Left colon (tissue), 2 donors: ENCODE measurements at regions of chr10 and their contacts with region 1.

Region 1: DNA sequence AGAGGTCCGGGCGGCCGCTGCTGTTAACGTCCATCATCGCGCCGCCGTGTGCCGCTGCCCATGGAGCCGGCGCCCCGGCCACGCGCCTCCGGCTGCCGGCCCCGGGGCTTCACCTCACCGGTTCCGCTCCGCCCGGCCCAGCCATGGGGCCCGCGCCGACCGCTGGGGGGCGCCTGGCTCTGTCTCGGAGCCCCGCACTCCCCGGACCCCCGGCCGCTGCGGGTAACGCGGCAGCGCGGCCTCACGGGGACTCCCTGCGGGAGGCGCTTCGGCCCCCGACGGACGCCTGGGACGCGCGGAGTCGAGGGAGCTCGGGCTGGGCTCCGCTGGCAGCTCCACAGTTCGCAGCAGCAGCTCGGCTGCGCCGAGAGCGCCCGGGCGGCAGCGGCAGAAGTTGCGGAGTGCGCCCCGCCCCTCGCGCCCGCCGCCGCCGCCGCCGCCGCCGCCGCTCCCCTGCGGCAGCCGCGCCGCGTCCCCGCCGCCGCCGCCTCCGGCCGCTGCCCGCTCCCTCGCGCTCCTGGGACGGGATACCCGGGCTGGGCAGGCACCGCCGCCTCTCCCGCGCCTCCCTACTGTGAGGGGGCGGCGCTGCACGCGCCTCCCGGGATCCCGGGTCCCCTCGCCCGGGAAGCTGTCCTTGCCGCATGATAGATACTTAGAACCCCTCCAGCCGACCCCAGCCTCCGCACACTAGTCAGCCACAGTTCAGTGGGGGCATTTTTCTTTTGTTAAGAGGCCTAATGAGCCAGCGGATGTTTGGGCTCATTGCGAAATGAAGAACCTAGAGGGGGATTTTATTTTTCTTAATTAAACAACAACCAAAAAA is at the start of gene HTR7:
- DNase-seq: peak in 1 of 2 donors; percentile 65
- ATAC-seq: peak; percentile 91
- total RNA-seq, gene HTR7: 0.21 to 0.61 TPM

Region 2: GRCh38 chr10:89793649-89794254 is 1064.1 kb before region 1 on chr10:
- intact Hi-C with region 1: loop called in 1 of 2 experiments (anchors 10 kb)
- DNase-seq: no peak
- ATAC-seq: peak; percentile 75

Region 3: DNA sequence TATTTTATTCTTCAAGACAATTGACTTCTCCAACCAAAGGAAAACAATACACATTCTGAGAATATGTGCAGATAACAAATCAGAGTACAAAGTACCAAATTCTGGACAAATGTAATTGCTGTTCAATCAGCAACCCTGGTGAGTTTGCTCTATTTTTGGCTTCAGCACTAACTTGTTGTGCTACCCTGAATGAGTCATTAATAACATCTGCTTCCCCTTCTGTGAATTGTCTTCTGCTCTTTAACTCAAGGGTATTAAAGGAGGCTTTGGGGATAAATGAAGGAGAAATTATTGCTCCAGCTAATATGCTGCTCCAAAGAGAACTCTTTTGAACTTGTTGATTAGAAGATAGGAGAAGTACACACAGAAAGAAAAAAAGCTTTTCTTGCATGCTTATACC is 459.3 kb before region 1 on chr10:
- intact Hi-C with region 1: no loop called
- DNase-seq: no peak
- ATAC-seq: no peak